Activated B cell treated with CpG ODN at 0.5 μM for 24 hours (primary cell): ENCODE measurements at regions of chr9 and their contacts with region 1.

Region 1: DNA sequence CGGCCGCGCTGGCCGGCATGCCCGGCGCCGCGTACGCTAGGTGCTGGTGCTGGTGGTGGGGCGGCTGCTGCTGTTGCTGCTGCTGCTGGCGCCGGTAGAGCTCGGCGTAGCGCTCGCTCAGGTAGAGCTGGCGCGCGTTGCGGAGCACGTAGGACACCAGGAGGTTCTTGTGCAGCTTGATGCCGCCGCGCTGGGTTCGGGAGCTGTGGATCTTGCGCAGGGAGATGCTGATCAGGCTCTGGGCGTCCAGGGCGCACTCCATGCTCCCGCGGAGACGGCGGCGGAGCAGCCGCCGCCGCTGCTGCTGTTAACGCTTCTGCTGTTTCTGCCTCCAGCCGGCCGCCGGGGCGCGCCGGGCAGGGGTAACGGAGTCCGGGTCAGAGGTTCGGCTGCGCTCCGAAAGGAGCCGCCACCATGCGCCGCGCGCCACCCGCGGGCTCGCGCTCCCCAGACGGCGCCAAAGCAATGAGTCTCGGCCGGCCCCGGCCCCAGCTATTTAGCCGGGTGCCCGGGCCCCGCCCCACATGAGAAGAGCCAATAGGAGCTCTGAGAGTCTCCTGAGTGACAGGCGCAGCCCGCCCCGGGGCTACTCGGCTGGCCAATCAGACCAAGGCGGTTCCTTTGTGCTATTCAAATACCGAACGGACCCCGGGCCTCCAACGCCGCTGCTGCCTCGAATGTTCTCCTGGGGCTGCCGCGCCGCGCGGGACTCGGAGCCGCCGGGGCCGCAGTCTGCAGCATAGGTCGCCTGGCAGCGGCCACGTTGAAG is at the start of gene IER5L:
- DNase-seq: peak; percentile 94
- ATAC-seq: peak; percentile 90
- H3K4me3 Mint-ChIP-seq: peak within 1 kb of the TSS; percentile 86
- H3K27ac Mint-ChIP-seq: peak within 1 kb of the TSS; percentile 56
- H3K4me1 Mint-ChIP-seq: peaks cover 23% of the 10 kb centered on the region
- H3K27me3 Mint-ChIP-seq: peaks cover 17% of the 10 kb centered on the region
- CTCF ChIP-seq: no peak
- total RNA-seq, gene IER5L: 1.9 and 2.1 TPM in 2 replicates

Region 2: DNA sequence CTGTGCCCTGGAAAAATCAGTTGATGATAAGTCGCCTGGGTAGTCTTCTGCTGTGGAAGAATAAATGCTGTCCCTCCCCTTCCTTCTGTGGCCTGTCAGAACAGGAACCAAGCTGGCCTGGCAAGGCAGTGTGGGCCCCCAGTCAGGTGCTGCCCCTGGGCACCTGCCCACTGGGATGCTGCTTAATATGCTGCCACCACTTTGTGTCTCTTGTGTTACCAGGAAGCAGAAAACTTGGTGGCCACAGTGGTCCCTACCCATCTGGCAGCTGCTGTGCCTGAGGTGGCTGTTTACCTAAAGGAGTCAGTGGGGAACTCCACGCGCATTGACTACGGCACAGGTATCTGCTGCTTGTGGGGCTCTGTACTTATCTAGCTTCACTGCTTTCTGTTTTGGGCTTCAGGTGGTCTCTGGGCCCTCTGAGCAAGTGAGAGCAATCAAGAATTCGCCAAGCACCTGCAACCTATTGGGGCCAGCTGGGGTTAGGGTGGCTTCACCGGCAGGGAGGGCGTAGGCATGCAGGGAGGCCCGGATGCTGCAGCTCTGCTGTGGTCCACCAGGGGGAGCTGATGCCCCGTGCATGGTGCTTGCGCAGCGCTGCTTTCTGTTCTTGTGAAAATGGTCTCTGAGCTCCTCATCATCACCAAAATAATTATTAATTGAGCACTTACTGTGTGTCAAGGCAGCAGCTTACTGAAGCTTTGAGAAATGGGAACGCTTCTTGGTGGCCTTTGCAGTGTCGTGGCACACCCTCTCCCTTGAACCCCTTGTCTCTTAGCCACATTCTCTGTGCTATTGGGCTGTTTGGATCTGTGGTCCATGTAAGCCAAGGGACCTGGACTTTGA is 46.5 kb before region 1 on chr9:
- CTCF ChIA-PET with region 1: interaction called, 24 read pairs
- POLR2A ChIA-PET with region 1: no interaction called
- intact Hi-C with region 1: no loop called
- DNase-seq: peak; percentile 77
- ATAC-seq: peak; percentile 100
- H3K4me3 Mint-ChIP-seq: no peak overlapping the region
- H3K27ac Mint-ChIP-seq: no peak overlapping the region
- H3K4me1 Mint-ChIP-seq: peaks cover 10% of the 10 kb centered on the region
- H3K27me3 Mint-ChIP-seq: no peaks in the 10 kb centered on the region
- CTCF ChIP-seq: peak; percentile 83

Region 3: GRCh38 chr9:129270903-129271431 is 93.0 kb after region 1 on chr9:
- CTCF ChIA-PET with region 1: no interaction called
- POLR2A ChIA-PET with region 1: no interaction called
- intact Hi-C with region 1: loop called (anchors 1 kb)
- DNase-seq: no peak
- ATAC-seq: no peak
- H3K4me3 Mint-ChIP-seq: peak overlapping the region; percentile 46
- H3K27ac Mint-ChIP-seq: no peak overlapping the region
- H3K4me1 Mint-ChIP-seq: peaks cover 22% of the 10 kb centered on the region
- H3K27me3 Mint-ChIP-seq: peaks cover 47% of the 10 kb centered on the region
- CTCF ChIP-seq: no peak

Region 4: DNA sequence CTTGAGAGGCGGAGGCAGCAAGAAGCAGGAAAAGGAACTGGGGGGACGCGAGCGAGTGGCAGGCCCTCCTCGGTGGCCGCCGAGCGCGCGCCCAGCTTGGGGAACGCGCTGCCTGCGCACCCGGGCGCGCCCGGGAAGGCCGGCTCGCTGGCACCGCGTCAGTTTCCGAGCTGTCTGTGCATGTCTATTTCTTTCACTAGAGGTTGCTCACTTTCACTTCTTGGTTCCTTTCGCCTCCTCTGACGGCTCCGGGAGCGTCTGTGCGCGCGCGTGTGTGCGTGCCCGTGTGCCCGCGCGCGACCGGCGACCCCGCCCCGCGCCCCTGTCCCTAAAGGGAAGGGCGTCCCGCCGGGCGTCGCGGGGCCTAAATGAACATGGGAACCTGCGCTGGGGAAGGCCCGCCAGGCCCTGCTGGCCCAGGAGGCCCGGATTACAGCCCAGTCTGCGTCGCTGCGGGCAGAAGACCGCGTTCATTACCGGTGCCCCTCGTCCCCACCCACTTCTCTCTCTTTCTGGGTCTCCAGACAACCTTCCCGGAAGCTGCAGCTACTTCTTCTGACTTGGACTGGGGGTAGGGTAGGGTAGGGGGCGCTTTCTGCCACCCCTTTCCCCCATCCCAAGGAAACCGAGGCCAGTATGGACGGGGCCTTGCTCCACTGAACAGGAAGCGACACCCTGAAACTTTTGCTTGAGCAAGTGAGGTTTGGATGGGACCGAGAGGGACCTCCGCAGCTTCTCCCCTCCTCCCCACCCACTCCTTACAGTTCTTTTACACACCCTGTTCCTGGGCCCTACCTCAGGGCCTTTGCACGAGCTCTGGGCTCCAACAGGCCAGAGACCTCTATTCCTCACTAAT is 205.8 kb after region 1 on chr9:
- CTCF ChIA-PET with region 1: interaction called, 4 read pairs
- POLR2A ChIA-PET with region 1: interaction called, 9 read pairs
- intact Hi-C with region 1: loop called (anchors 1 kb)
- DNase-seq: peak; percentile 82
- ATAC-seq: peak; percentile 91
- H3K4me3 Mint-ChIP-seq: peak overlapping the region; percentile 80
- H3K27ac Mint-ChIP-seq: peak overlapping the region; percentile 90
- H3K4me1 Mint-ChIP-seq: peaks cover 24% of the 10 kb centered on the region
- H3K27me3 Mint-ChIP-seq: peaks cover 4% of the 10 kb centered on the region
- CTCF ChIP-seq: no peak

Region 5: GRCh38 chr9:129460323-129461261 is 282.6 kb after region 1 on chr9:
- CTCF ChIA-PET with region 1: interaction called, 3 read pairs
- POLR2A ChIA-PET with region 1: interaction called, 15 read pairs
- intact Hi-C with region 1: loop called (anchors 1 kb)
- DNase-seq: peak; percentile 70
- ATAC-seq: peak; percentile 85
- H3K4me3 Mint-ChIP-seq: peak overlapping the region; percentile 79
- H3K27ac Mint-ChIP-seq: peak overlapping the region; percentile 83
- H3K4me1 Mint-ChIP-seq: peaks cover 22% of the 10 kb centered on the region
- H3K27me3 Mint-ChIP-seq: peaks cover 5% of the 10 kb centered on the region
- CTCF ChIP-seq: no peak

Region 6: DNA sequence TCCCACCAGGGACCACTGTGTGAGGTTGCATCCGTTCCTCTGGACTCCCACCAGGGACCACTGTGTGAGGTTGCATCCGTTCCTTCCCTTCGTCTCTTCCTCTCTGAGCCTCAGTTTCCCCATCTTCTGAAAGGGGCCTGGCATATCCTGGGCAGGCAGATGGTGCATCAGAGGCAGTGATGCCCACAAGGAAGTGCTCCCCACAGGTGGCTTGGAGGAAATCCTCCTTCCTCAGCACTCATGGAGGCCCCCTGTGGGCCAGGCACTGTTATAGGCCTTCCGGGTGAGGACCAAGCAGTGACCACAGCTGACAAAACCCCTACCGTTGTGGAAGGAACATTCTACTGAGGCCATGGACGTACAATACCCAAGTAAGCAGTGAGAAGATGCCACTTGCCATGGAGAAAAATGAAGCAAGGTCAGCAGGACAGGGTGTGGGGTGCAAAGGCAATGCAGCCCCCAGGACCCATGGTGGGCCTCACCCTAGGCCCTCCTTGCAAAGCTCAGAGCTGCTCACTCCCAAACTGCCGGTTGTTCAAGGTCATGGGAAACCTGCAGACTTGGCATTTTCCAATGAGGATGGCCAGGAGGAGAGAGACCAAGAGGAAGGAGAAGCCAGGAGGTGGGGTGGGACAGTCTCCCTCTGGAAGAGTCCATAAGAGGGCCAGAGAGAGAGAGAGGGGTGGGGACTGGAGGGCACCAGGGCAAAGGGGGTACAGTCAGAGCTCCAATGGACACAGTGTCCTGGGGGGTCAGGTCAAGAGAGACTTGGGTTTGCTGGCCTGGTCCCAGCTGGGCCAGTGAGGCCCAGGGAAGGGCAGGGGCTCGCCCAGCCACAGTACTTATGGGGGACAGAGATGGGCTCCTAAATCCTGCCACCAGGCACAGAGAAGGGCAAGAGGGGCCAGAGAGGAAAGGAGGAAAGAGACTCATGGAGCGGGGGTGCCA is 391.8 kb after region 1 on chr9:
- CTCF ChIA-PET with region 1: no interaction called
- POLR2A ChIA-PET with region 1: no interaction called
- intact Hi-C with region 1: loop called (anchors 2 kb)
- DNase-seq: no peak
- ATAC-seq: peak; percentile 50
- H3K4me3 Mint-ChIP-seq: peak overlapping the region; percentile 72
- H3K27ac Mint-ChIP-seq: no peak overlapping the region
- H3K4me1 Mint-ChIP-seq: peaks cover 12% of the 10 kb centered on the region
- H3K27me3 Mint-ChIP-seq: peaks cover 33% of the 10 kb centered on the region
- CTCF ChIP-seq: no peak

Region 7: DNA sequence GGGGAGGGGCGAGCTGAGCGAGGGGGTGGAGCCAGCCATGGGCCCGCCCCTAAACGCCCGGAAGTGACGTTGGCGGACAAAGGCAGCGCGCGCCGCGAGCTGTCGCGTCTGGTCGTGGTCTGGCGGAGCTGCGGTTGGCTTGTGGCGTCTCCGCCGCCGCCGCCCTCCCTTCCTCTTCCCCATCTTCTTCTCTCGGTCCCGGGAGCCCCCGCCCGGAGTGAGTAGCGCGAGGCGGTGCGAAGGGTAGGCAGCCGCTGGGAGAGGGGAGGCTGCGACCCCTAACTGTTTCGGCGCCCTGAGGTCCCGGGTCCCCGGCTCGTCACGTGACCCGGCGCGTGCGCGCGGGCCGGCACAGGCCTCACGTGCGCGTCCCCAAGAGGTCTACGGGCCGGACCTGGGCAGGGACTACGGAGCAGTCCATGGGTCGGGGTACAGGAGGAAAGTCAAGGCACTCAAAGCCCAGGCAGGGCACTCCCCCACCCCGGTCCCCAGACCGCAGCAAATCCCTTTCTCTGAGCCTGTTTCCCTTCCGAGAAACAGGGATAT is 448.2 kb after region 1 on chr9 and contains the start of gene NTMT1:
- CTCF ChIA-PET with region 1: interaction called, 15 read pairs
- POLR2A ChIA-PET with region 1: interaction called, 11 read pairs
- intact Hi-C with region 1: loop called (anchors 1 kb)
- DNase-seq: peak; percentile 92
- ATAC-seq: peak; percentile 81
- H3K4me3 Mint-ChIP-seq: peak within 1 kb of the TSS; percentile 89
- H3K27ac Mint-ChIP-seq: peak within 1 kb of the TSS; percentile 88
- H3K4me1 Mint-ChIP-seq: peaks cover 54% of the 10 kb centered on the region
- H3K27me3 Mint-ChIP-seq: peaks cover 7% of the 10 kb centered on the region
- CTCF ChIP-seq: no peak
- total RNA-seq, gene NTMT1: 33.1 and 40.1 TPM in 2 replicates

Region 8: DNA sequence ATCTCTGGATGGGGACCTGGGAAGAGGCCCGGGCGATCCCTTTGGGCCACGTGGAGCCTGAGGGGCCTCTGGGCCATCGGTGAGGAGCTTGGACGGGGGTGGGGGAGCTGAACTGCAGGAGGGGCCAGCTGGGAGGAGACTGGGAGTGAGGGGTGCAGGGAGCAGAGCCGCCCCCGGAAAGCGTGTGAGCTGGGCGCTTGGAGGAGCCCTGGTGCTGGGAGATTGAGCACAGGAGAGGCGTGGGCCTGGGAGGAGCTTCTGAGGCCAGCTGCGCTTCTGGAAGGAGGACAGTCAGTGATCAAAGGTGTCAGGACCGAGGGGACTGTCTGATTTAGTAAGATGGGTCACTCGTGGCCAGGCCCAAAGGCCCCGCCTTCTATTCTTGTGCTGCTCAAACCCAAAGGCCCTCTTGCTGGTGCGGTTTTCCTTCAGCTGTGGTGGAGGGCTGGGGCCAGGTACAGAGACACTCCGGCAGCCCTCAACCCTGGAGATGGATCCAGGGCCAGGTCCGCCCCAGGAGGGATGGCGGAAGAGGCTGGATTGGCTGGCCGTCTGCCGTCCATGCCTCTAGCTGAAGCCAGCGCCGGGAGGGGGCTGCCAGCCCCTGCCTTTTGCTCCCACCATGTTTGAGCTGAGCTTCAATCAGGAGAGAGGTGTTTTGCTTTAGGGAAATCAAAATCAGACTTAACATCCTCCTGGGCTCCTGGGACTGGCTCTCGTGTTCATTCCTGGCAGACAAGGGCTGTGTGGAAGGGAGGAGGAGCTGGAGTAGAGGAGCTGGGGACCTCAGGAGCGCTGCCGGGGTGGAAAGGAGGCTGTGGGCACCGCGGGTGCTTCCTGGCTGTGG is 1015.8 kb after region 1 on chr9:
- CTCF ChIA-PET with region 1: no interaction called
- POLR2A ChIA-PET with region 1: no interaction called
- intact Hi-C with region 1: no loop called
- DNase-seq: no peak
- ATAC-seq: no peak
- H3K4me3 Mint-ChIP-seq: no peak overlapping the region
- H3K27ac Mint-ChIP-seq: no peak overlapping the region
- H3K4me1 Mint-ChIP-seq: no peaks in the 10 kb centered on the region
- H3K27me3 Mint-ChIP-seq: peaks cover 22% of the 10 kb centered on the region
- CTCF ChIP-seq: no peak